Activated CD4-positive, alpha-beta memory T cell treated with anti-CD3 and anti-CD28 coated beads, Interleukin-2, amount 10 ng/mL, durations not matched to agents 7 days and 5 days (primary cell): ENCODE measurements at regions of chr11 and their contacts with region 1.

Region 1: DNA sequence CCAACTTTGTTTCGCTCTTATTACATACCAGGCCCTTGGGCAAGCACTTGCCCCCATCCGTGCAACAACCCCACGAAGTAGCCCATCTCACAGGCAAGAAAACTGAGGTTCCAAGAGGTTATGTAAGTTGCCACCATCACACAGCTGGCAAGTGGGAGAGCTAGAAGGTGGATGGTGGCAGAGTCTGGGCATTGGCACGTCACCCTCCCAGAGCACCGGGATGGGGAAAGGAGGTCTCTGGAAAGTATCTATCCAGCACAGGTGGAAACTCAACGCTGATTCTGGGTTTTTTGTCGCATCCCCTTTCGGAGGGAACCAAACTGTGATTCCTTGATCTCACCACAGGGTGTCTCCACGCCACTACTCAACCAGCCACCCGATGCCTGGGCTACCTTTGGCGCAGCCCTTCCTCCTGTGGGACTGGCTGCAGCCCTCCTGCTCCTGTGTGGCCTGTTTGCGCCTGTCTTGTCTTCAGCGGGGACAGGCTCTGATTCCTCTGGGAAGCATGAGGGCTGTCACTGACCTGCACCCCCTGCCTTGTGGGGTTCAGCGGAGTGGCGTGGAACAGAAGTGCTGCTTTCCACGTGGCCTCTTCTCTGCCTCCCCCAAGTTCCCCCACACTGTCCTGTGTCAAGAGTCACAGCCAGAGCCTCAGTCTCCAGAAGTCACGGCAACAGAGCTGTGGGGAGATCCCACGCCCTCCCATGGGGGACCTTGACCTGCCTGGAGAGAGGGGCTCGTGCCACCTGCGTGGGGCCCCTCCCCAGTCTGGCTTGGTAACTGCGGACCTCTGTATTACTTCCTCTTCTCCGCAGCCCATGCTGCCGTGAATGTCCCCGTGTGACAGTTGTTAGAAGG is 34.4 kb upstream of the TRIM29 start:
- DNase-seq: peak; percentile 52
- H3K4me3 Mint-ChIP-seq: no peak overlapping the region
- H3K27ac Mint-ChIP-seq: no peak overlapping the region
- H3K4me1 Mint-ChIP-seq: peaks cover 3% of the 10 kb centered on the region
- H3K27me3 Mint-ChIP-seq: peaks cover 68% of the 10 kb centered on the region

Region 2: DNA sequence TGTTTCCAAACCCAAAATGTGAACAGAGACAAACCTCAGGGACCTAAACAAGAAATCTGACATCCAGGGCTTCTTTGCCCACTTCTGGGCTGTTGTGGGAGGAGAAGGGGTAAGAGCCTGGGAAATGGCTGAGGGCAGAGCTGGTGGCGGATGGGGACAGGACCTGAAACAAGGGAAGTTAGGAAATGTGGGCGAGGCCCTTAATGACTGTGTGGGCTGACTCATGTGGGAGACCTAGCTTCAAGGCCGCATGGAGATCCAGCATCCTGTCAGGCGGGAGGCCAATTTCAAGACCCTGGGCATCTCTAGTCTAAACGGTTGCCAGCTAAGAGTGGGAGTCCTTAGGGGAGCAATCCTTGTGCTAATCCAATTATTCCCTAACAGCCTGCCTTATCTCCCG is 36.5 kb after region 1 on chr11:
- CTCF ChIA-PET with region 1: no interaction called
- POLR2A ChIA-PET with region 1: no interaction called
- DNase-seq: no peak
- H3K4me3 Mint-ChIP-seq: no peak overlapping the region
- H3K27ac Mint-ChIP-seq: no peak overlapping the region
- H3K4me1 Mint-ChIP-seq: peaks cover 15% of the 10 kb centered on the region
- H3K27me3 Mint-ChIP-seq: peaks cover 54% of the 10 kb centered on the region

Region 3: DNA sequence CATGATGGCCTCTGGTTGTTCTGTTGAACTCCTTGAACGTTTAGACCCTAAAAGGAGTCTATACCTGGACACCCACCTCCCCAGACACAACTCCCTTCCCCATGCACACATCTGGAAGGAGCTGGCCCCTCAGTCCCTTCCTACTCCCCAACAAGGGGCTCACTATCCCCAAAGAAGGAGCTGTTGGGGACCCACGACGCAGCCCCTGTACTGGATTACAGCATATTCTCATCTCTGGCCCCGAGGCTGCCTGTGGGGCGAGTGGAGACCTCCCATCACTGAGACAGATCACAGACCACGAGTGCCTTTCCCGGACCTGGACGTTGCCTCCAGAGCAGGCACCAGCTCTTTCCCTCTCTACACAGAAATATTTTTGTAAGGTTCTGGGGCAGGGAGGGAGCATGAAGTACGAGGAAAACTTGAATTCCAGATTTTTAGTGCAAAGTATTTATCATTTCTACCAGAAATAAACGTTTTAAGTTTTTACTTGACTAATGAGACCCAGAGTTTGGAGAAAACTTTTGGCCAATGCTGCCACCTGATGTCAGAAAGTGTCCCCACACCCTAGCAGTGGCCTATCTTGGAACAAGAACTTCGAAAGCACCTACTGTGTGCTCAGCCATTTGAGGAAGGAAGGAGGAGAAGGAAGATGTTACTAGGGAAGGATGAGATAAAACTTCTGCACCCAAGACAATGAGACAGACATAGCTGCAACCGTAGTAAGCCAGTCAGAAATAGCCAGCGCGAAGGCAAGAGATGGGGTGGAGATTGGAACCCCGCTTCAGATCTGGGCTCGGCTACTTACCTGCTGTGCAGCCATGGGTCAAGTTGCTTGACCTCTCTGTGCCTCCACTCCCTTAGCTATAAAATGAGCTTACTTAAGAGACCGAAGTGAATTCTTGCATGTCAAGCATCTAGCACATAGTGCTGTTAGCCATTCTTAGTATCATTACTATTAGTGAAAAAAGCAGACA is 57.5 kb after region 1 on chr11:
- CTCF ChIA-PET with region 1: interaction called, 22 read pairs
- POLR2A ChIA-PET with region 1: interaction called, 3 read pairs
- DNase-seq: peak; percentile 25
- H3K4me3 Mint-ChIP-seq: no peak overlapping the region
- H3K27ac Mint-ChIP-seq: no peak overlapping the region
- H3K4me1 Mint-ChIP-seq: no peaks in the 10 kb centered on the region
- H3K27me3 Mint-ChIP-seq: peaks cover 23% of the 10 kb centered on the region

Region 4: DNA sequence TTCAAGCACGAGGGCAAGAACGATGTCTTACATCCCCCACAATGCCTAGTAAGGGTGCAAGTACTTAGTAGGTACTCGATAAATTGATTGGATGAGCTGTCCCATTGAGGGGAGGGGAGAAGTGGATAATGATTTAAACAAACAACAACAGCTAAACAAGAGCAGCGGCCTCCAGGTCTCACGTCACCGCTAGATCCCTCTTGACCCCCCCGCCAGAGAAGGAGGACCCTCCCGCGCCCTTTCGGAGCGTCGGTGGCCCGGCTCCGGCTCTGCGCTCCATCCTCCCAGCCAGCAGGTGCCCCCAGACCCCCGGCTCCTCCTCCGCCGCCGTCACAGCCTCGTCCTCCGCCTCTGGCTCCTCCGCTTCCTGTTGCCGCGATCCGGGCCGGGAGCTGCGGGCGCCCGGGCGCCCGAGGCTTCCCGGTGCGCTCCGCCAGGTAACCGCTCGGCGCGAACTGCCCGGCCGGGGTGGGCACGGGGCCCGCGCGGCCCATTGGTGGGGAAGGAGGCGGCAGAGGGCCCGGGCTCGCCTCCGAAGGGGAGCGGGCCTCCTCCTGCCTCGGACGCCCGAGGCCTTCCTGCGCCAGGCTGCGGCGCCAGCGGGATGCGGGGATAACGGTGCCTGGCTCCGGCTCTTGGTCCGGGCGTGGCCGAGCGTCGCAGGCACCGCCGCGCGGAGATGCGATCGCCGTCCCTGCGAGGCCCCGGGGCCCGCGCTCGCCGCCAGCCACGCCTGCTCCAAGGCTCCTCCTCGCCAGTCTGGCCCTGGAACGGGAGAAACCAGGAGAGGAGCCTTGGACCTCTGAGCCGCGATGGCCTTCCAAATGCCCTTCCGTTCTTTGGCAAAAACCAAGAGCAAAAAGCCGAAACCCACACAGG is 152.9 kb after region 1 on chr11 and contains the start of gene TLCD5:
- CTCF ChIA-PET with region 1: no interaction called
- POLR2A ChIA-PET with region 1: no interaction called
- DNase-seq: peak; percentile 52
- H3K4me3 Mint-ChIP-seq: peak within 1 kb of the TSS; percentile 68
- H3K27ac Mint-ChIP-seq: peak within 1 kb of the TSS; percentile 3
- H3K4me1 Mint-ChIP-seq: peaks cover 22% of the 10 kb centered on the region
- H3K27me3 Mint-ChIP-seq: peaks cover 49% of the 10 kb centered on the region
- total RNA-seq, gene TLCD5: 1.2 to 1.4 TPM